Calu3 (cell line): ENCODE measurements at regions of chr7 and their contacts with region 1.

Region 1: DNA sequence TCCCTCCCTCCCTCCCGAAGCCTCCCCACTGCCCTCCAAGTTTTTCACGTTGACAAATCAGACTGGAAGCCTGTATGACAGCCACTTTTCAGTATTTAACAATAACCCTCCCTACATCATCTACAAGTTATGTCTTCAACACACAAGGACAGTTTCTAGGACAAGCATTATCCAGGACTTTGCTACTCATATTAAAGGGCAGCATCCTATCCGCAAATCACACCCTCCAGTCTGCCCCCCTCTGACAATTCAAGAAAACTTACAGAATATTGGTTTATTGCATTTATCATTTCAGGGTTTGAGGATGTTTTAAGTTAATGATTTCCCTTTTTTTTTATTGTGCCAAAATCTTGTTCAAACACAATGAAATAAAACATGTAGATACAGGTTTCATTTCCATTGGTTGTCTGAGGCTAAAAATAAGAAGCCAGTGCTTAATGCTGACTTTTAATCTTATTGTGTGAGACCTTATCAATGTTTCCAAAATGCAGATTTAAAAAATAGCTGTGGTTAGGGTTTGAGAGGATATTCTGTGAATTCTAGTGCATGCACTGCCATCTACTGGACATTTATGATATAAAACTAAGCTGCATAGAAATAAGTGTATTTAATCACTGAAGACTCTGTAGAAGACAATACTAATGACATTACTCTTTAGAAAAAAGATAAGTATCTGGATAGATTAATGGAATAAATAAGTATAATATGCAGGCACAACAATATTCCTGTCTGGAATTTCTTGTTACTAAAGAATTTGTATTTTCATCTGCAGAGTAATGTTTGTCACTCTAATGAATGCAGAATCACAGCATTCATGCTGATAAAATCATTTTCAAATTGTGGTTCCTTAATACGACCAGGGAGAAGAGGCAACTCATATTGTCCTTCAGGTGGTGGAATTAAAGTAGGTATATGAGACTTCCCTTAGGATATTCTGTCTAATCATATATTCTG is 64.1 kb downstream of the CAV1 start:
- DNase-seq: no peak
- H3K4me3 Mint-ChIP-seq: no peak overlapping the region
- H3K27ac Mint-ChIP-seq: no peak overlapping the region
- H3K4me1 Mint-ChIP-seq: peaks cover 37% of the 10 kb centered on the region
- H3K27me3 Mint-ChIP-seq: no peaks in the 10 kb centered on the region
- CTCF ChIP-seq: peak; percentile 47

Region 2: DNA sequence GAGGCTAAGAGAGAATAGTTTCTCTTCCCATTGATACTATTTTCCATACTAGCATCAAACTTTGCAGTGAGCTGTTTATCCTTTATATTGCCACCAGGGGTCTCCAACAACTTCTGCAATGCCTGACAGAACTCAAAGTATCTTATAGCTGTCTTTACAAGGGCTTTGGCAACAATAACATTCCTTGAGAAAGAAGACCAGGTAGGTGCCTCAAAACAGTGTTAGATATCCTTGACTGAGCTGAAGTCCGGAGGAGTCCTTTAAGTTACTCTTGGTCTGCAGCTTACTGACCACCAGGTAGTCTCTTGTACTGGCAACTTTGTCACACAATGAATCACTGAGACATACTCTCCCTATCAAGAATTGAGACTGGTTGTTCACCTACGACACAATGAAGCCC is 408.6 kb before region 1 on chr7:
- CTCF ChIA-PET with region 1: interaction called, 21 read pairs
- intact Hi-C with region 1: no loop called
- DNase-seq: peak; percentile 22
- H3K4me3 Mint-ChIP-seq: no peak overlapping the region
- H3K27ac Mint-ChIP-seq: no peak overlapping the region
- H3K4me1 Mint-ChIP-seq: no peaks in the 10 kb centered on the region
- H3K27me3 Mint-ChIP-seq: no peaks in the 10 kb centered on the region
- CTCF ChIP-seq: peak; percentile 75

Region 3: DNA sequence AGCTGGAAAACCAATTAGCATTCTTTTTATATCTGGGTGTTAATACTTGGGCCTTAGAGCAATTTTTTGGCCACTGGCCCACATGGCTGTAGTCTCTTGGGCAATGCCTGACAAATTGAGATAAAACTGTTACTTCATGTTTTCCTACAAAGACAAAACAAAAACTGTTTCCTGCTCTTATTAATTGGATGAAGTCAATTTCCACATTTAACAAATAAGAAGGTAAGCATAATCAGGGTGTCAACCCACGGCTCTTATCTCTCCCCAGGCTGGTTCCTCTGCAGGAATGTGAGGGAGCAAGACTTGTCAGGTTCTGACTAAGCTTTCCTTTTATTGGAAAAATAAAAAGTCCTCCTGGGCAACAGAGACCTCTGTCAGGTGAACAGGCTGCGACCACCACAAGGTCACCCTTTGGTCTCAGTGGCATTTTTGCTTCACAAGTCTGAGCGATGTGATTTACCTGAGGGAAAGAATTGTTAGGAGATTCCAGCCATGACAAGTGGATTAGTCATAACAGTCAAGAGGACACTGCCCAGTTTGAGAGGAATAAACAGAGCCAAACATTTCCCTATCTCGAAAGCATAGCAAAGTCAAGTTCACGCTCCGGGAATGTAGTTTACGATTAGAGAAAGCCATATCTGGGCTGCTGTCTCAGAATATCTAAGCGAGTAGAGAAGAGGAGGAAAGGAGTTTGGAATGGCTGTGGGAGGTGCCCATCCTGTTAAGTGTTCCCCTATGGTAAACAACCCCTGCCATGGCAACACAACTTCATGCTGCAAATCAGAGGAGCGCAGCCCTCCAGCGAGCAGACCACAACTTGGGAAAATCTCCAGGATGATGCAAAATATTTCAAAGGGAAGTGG is 234.1 kb before region 1 on chr7:
- CTCF ChIA-PET with region 1: no interaction called
- intact Hi-C with region 1: loop called (anchors 5 kb)
- DNase-seq: peak; percentile 84
- H3K4me3 Mint-ChIP-seq: peak overlapping the region; percentile 69
- H3K27ac Mint-ChIP-seq: peak overlapping the region; percentile 98
- H3K4me1 Mint-ChIP-seq: peaks cover 56% of the 10 kb centered on the region
- H3K27me3 Mint-ChIP-seq: no peaks in the 10 kb centered on the region
- CTCF ChIP-seq: no peak

Region 4: GRCh38 chr7:116525913-116526861 is 62.7 kb before region 1 on chr7:
- CTCF ChIA-PET with region 1: interaction called, 20 read pairs
- intact Hi-C with region 1: loop called (anchors 1 kb)
- DNase-seq: peak; percentile 86
- H3K4me3 Mint-ChIP-seq: peak overlapping the region; percentile 93
- H3K27ac Mint-ChIP-seq: peak overlapping the region; percentile 73
- H3K4me1 Mint-ChIP-seq: peaks cover 59% of the 10 kb centered on the region
- H3K27me3 Mint-ChIP-seq: no peaks in the 10 kb centered on the region
- CTCF ChIP-seq: peak; percentile 93

Region 5: GRCh38 chr7:116741625-116742316 is 152.9 kb after region 1 on chr7:
- CTCF ChIA-PET with region 1: no interaction called
- intact Hi-C with region 1: no loop called
- DNase-seq: no peak
- H3K4me3 Mint-ChIP-seq: no peak overlapping the region
- H3K27ac Mint-ChIP-seq: no peak overlapping the region
- H3K4me1 Mint-ChIP-seq: no peaks in the 10 kb centered on the region
- H3K27me3 Mint-ChIP-seq: no peaks in the 10 kb centered on the region
- CTCF ChIP-seq: no peak

Region 6: DNA sequence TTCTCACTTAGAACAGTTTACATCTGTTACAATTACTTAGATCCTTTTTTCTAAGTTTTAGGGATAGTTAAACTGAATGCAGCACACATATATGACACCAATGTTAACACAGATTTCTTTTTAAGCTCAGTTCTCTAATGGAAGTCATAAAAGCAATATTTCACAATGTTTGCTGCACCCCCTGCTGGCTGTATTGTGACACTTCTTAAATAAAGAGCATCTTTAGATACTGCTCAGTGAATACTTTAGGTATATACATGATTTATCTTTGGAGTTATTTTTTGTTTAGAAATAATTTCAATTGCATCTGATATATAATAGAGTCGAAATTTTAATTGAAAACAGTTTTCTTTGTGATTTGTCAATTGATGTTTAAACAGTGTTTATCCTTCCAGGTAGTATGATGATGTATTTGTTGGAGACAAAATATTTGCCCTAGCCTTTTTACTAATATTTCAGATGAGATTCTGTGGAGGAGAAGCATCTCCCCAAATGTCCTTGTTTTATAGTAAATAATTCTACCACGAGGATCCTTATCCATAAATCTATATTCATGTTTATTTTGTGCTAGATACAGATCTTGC is 538.8 kb after region 1 on chr7:
- CTCF ChIA-PET with region 1: no interaction called
- intact Hi-C with region 1: loop called (anchors 10 kb)
- DNase-seq: peak; percentile 47
- H3K4me3 Mint-ChIP-seq: no peak overlapping the region
- H3K27ac Mint-ChIP-seq: no peak overlapping the region
- H3K4me1 Mint-ChIP-seq: no peaks in the 10 kb centered on the region
- H3K27me3 Mint-ChIP-seq: no peaks in the 10 kb centered on the region
- CTCF ChIP-seq: peak; percentile 49